Panc1 (cell line): ENCODE measurements at regions of chr17 and their contacts with region 1.

Region 1: DNA sequence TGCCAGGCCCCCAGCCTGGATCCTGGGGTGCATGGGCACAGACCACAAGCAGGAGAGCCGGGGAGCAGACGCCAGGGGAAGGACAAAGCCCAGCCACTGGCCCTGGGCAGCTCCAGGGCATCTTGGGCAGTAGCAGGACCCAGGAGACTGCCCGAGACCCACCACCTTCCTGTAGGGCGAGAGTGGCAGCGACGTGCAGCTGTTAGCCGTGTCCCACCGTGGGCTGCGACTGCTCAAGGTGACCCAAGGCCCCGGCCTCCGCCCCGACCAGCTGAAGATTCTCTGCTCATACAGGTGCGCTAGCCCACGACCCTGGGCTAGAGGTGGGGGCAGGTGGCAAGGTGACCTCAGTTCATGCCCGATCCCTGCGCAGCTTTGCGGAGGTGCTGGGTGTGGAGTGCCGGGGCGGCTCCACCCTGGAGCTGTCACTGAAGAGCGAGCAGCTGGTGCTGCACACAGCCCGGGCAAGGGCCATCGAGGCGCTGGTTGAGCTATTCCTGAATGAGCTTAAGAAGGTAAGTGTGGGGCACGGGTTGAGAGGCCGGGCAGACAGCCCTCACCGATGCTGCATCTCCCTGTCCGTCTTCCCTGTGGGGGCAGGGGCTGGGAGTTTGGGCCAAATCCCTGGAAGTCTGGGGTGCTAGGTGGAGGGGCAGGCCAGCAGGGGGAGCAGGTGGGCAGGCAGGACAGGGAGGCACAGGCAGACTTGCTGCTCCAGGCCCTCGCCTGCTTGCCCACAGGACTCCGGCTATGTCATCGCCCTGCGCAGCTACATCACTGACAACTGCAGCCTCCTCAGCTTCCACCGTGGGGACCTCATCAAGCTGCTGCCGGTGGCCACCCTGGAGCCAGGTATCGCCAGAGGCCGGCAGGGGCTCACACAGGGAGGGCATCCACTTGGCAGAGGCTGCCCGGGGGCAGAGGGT is 13.5 kb upstream of the SMIM5 start:
- DNase-seq: no peak
- ATAC-seq: peak; percentile 55
- H3K4me3 ChIP-seq: no peak overlapping the region
- H3K27ac ChIP-seq: no peak overlapping the region
- H3K4me1 ChIP-seq: no peaks in the 10 kb centered on the region
- H3K27me3 ChIP-seq: no peaks in the 10 kb centered on the region
- CTCF ChIP-seq: peak; percentile 87

Region 2: DNA sequence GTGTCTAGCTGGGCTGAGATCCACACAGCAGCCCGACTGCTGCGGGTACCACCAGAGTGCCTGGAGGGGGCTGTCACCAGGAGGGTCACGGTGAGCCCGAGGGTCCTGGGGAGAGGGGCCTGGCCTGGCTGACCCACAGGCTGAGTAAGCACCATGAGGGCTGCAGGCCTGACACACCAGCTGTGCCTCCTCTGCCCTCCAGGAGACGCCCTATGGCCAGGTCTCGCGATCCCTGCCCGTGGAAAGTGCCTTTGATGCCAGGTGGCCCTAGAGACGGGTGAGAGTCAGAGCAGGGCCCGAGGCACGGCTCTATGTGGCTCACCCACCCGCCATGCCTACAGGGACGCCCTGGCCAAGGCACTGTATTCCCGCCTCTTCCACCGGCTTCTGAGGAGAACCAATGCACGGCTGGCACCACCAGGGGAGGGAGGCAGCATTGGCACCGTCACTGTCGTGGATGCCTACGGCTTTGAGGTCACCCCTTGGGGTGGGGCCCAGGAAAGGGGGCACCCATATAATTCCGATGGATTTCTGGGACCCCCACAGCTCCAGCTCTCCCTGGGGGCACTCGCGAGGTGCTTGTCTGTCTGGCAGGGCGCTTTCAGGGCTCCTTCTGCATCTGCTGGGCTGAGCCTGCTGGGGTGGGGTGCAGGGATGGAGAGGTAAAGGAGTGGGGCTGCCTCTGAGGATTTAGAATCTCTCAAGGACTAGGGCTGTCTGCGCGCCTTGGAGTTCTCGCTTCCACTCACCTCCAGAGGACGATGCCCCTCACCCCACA is 25.1 kb before region 1 on chr17:
- CTCF ChIA-PET with region 1: no interaction called
- POLR2A ChIA-PET with region 1: interaction called, 16 read pairs
- in situ Hi-C with region 1: no loop called
- intact Hi-C with region 1: no loop called
- DNase-seq: no peak
- ATAC-seq: peak; percentile 46
- H3K4me3 ChIP-seq: no peak overlapping the region
- H3K27ac ChIP-seq: no peak overlapping the region
- H3K4me1 ChIP-seq: peaks cover 7% of the 10 kb centered on the region
- H3K27me3 ChIP-seq: no peaks in the 10 kb centered on the region
- CTCF ChIP-seq: no peak

Region 3: GRCh38 chr17:75822119-75822799 is 202.5 kb after region 1 on chr17:
- CTCF ChIA-PET with region 1: no interaction called
- POLR2A ChIA-PET with region 1: no interaction called
- in situ Hi-C with region 1: no loop called
- intact Hi-C with region 1: no loop called
- DNase-seq: no peak
- ATAC-seq: no peak
- H3K4me3 ChIP-seq: no peak overlapping the region
- H3K27ac ChIP-seq: no peak overlapping the region
- H3K4me1 ChIP-seq: no peaks in the 10 kb centered on the region
- H3K27me3 ChIP-seq: no peaks in the 10 kb centered on the region
- CTCF ChIP-seq: no peak

Region 4: DNA sequence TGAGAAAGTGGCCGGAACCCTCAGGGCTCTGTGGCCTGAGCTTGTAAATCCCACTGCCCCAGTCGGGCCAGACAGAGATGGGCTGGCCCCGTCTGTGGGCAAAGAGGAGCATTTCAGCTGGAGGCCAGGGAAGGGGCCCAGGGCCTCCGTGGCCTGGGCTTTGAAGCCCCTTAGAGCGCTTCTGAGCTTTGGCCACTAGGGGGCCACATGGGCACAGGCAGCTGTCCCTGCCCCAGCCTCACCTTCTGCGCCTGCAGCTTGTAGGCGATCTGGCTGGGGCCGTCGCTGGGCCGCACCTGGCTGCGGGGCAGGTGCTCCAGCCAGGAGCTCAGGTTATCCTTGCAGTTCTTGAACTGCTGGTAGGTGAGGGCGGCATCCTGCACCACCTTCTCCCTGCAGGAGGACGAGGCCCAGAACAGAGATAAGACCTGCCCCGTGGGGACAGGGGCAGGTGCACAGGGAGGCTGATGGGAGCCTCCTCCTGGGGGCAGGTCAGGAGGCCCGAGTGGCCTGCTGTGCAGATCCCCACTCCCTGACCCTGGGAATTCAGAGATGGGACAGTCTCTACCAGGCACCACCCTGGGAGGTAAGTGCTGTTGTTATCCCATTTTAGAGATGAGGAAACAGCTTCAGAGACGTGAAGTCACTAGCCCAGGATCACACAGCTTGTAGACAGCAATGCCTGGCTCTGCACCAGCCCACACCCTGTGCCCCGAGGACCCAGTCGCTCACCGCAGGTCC is 394.6 kb after region 1 on chr17:
- CTCF ChIA-PET with region 1: no interaction called
- POLR2A ChIA-PET with region 1: no interaction called
- in situ Hi-C with region 1: no loop called
- intact Hi-C with region 1: no loop called
- DNase-seq: peak; percentile 32
- ATAC-seq: peak; percentile 91
- H3K4me3 ChIP-seq: no peak overlapping the region
- H3K27ac ChIP-seq: no peak overlapping the region
- H3K4me1 ChIP-seq: no peaks in the 10 kb centered on the region
- H3K27me3 ChIP-seq: no peaks in the 10 kb centered on the region
- CTCF ChIP-seq: peak; percentile 99